Psoas muscle (tissue), 8 donors: ENCODE measurements at regions of chr1 and their contacts with region 1.

Region 1: GRCh38 chr1:103106426-103107341 is 1.6 kb downstream of the COL11A1 start:
- DNase-seq: peak; percentile 12 to 51
- ATAC-seq: peak in 3 of 4 donors; percentile 65 to 88 (median 77)
- H3K4me3 ChIP-seq: peak overlapping the region; percentile 62
- H3K27ac ChIP-seq: no peak overlapping the region
- H3K4me1 ChIP-seq: no peaks in the 10 kb centered on the region
- H3K27me3 ChIP-seq: peaks cover 0 to 2% (median 0%) of the 10 kb centered on the region in 3 donors
- CTCF ChIP-seq: peak; percentile 50

Region 2: DNA sequence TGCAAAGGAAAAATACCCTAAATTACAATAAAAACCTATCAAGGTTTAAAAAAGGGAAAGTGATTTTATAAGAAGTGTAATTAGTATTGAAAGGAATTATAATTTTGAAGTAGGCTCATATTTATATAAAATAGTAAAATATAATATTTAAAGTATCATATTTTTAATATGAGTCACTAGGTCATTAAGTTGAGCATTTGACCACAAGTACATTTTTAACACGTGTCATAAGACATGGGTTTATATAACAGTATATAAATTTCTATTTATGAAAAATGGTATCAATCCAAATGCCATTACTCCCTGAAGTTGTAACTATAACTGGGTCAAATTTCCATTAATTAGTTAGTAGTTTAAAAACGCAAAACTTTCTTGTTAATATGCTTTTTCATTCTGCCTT is 364.3 kb before region 1 on chr1:
- intact Hi-C with region 1: no loop called
- DNase-seq: no peak
- ATAC-seq: no peak
- H3K4me3 ChIP-seq: no peak overlapping the region
- H3K27ac ChIP-seq: no peak overlapping the region
- H3K4me1 ChIP-seq: no peaks in the 10 kb centered on the region
- H3K27me3 ChIP-seq: no peaks in the 10 kb centered on the region
- CTCF ChIP-seq: no peak

Region 3: DNA sequence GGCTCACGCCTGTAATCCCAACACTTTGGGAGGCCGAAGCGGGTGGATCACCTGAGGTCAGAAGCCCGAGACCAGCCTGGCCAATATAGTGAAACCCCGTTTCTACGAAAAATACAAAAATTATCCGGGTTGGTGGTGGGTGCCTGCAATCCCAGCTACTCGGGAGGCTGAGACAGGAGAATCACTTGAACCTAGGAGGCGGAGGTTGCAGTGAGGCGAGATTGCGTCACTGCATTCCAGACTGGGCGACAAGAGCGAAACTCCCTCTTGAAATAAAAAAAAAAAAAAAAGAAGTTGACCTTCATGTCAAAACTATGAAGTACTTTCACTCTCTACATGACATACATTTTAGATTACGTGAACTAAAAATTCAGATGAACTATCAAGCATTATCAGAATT is 152.1 kb before region 1 on chr1:
- intact Hi-C with region 1: no loop called
- DNase-seq: no peak
- ATAC-seq: no peak
- H3K4me3 ChIP-seq: no peak overlapping the region
- H3K27ac ChIP-seq: no peak overlapping the region
- H3K4me1 ChIP-seq: no peaks in the 10 kb centered on the region
- H3K27me3 ChIP-seq: no peaks in the 10 kb centered on the region
- CTCF ChIP-seq: no peak

Region 4: DNA sequence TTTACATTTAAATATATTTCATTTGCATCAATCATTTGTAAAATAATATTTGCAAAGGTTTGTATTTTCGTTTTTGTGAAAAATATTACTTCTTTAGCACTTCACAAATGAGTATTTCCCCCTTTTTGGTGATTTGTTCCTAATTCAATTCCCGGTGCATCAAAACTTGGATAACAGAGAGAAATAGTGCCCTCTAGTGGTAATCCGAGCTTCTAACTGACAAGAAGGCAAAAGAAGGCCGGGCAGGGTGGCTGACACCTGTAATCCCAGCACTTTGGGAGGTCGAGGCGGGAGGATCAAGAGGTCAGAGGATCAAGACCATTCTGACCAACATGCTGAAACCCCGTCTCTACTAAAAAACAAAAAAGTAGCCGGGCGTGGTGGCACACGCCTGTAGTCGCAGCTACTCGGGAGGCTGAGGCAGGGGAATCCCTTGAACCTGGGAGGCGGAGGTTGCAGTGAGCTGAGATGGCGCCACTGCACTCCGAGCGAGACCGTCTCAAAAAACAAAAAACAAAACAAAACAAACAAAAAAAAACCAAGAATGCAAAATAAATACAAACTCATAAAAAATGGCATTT is 136.1 kb before region 1 on chr1:
- intact Hi-C with region 1: no loop called
- DNase-seq: no peak
- ATAC-seq: no peak
- H3K4me3 ChIP-seq: no peak overlapping the region
- H3K27ac ChIP-seq: no peak overlapping the region
- H3K4me1 ChIP-seq: no peaks in the 10 kb centered on the region
- H3K27me3 ChIP-seq: no peaks in the 10 kb centered on the region
- CTCF ChIP-seq: no peak

Region 5: GRCh38 chr1:103461161-103462105 is 354.7 kb after region 1 on chr1:
- intact Hi-C with region 1: loop called (anchors 5 to 10 kb)
- DNase-seq: no peak
- ATAC-seq: no peak
- H3K4me3 ChIP-seq: no peak overlapping the region
- H3K27ac ChIP-seq: no peak overlapping the region
- H3K4me1 ChIP-seq: no peaks in the 10 kb centered on the region
- H3K27me3 ChIP-seq: no peaks in the 10 kb centered on the region
- CTCF ChIP-seq: peak; percentile 48

Region 6: GRCh38 chr1:103514920-103515503 is 408.3 kb after region 1 on chr1:
- intact Hi-C with region 1: loop called (anchors 2 to 5 kb)
- DNase-seq: no peak
- ATAC-seq: peak in 3 of 4 donors; percentile 39 to 87 (median 53)
- H3K4me3 ChIP-seq: no peak overlapping the region
- H3K27ac ChIP-seq: no peak overlapping the region
- H3K4me1 ChIP-seq: peaks cover 4% of the 10 kb centered on the region
- H3K27me3 ChIP-seq: no peaks in the 10 kb centered on the region
- CTCF ChIP-seq: peak; percentile 77